IMR-90 (cell line): ENCODE measurements at regions of chr6 and their contacts with region 1.

Region 1: GRCh38 chr6:28399350-28400121 is at the start of gene ZSCAN12:
- DNase-seq: peak; percentile 89
- ATAC-seq: peak; percentile 98
- H3K4me3 ChIP-seq: peak within 1 kb of the TSS; percentile 90
- H3K27ac ChIP-seq: peak within 1 kb of the TSS; percentile 84
- H3K4me1 ChIP-seq: peaks cover 6% of the 10 kb centered on the region; the same call in 1 of the 2 replicates
- H3K27me3 ChIP-seq: no peaks in the 10 kb centered on the region
- CTCF ChIP-seq: peak; percentile 65
- POLR2A ChIP-seq: peak; percentile 76
- RAD21 ChIP-seq: no peak
- total RNA-seq, gene ZSCAN12: 6.4 and 6.5 TPM in 2 replicates

Region 2: GRCh38 chr6:28383235-28384142 is 16.0 kb before region 1 on chr6:
- CTCF ChIA-PET with region 1: no interaction called
- POLR2A ChIA-PET with region 1: no interaction called
- dilution Hi-C with region 1: no loop called
- in situ Hi-C with region 1: no loop called
- intact Hi-C with region 1: loop called (anchors 2 kb)
- DNase-seq: peak; percentile 93
- ATAC-seq: peak; percentile 98
- H3K4me3 ChIP-seq: peak overlapping the region; percentile 48
- H3K27ac ChIP-seq: peak overlapping the region; percentile 49
- H3K4me1 ChIP-seq: no peaks in the 10 kb centered on the region
- H3K27me3 ChIP-seq: no peaks in the 10 kb centered on the region
- CTCF ChIP-seq: peak; percentile 51
- POLR2A ChIP-seq: peak; percentile 77
- RAD21 ChIP-seq: peak; percentile 46

Region 3: GRCh38 chr6:28433119-28433518 is 33.6 kb after region 1 on chr6:
- CTCF ChIA-PET with region 1: no interaction called
- POLR2A ChIA-PET with region 1: no interaction called
- dilution Hi-C with region 1: no loop called
- in situ Hi-C with region 1: no loop called
- intact Hi-C with region 1: no loop called
- DNase-seq: no peak
- ATAC-seq: no peak
- H3K4me3 ChIP-seq: no peak overlapping the region
- H3K27ac ChIP-seq: no peak overlapping the region
- H3K4me1 ChIP-seq: no peaks in the 10 kb centered on the region
- H3K27me3 ChIP-seq: no peaks in the 10 kb centered on the region
- CTCF ChIP-seq: no peak
- POLR2A ChIP-seq: no peak
- RAD21 ChIP-seq: no peak

Region 4: GRCh38 chr6:28443112-28443773 is 43.7 kb after region 1 on chr6 and contains the start of gene ZSCAN23:
- CTCF ChIA-PET with region 1: no interaction called
- POLR2A ChIA-PET with region 1: no interaction called
- dilution Hi-C with region 1: no loop called
- in situ Hi-C with region 1: no loop called
- intact Hi-C with region 1: loop called (anchors 1 kb)
- DNase-seq: peak; percentile 92
- ATAC-seq: peak; percentile 91
- H3K4me3 ChIP-seq: peak within 1 kb of the TSS; percentile 91
- H3K27ac ChIP-seq: peak within 1 kb of the TSS; percentile 52
- H3K4me1 ChIP-seq: no peaks in the 10 kb centered on the region
- H3K27me3 ChIP-seq: no peaks in the 10 kb centered on the region
- CTCF ChIP-seq: no peak
- POLR2A ChIP-seq: peak; percentile 94
- RAD21 ChIP-seq: no peak
- total RNA-seq, gene ZSCAN23: 5.3 and 8.4 TPM in 2 replicates

Region 5: GRCh38 chr6:28474441-28475219 is 75.1 kb after region 1 on chr6:
- CTCF ChIA-PET with region 1: no interaction called
- POLR2A ChIA-PET with region 1: no interaction called
- dilution Hi-C with region 1: no loop called
- in situ Hi-C with region 1: no loop called
- intact Hi-C with region 1: loop called (anchors 2 kb)
- DNase-seq: peak; percentile 92
- ATAC-seq: peak; percentile 98
- H3K4me3 ChIP-seq: peak overlapping the region; percentile 72
- H3K27ac ChIP-seq: no peak overlapping the region
- H3K4me1 ChIP-seq: no peaks in the 10 kb centered on the region
- H3K27me3 ChIP-seq: peaks cover 7% of the 10 kb centered on the region
- CTCF ChIP-seq: no peak
- POLR2A ChIP-seq: no peak
- RAD21 ChIP-seq: no peak